ENCODE measurements at regions of chrX and their contacts with region 1.

Region 1: GRCh38 chrX:41653125-41653524 is 35.6 kb upstream of the GPR34 start:
- DNase-seq: no peak
- H3K4me3 ChIP-seq: no peak overlapping the region
- H3K27ac ChIP-seq: no peak overlapping the region
- H3K4me1 ChIP-seq: no peaks in the 10 kb centered on the region
- H3K27me3 ChIP-seq: peaks cover 0 to 18% of the 10 kb centered on the region in 2 donors
- CTCF ChIP-seq: no peak
- POLR2A ChIP-seq: no peak

Region 2: DNA sequence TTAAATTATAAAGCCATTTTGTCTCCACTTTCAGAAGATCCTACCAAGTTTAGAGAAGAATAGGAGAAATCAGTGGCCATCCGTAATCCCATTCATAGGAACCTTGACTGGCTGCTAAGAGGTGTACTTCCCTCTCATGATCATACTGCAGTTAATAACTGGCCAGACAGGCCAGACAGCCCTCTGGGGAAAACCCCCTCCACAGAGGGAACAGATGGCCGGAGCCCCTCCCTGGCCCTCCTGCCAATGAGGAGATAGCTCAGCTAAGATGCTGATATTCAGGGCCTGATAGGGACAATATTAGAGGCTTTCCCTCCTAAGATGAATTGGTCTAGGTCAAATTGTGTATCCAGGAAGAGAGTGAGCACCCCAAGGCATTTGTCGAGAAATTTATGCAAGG is 1802.9 kb after region 1 on chrX:
- intact Hi-C with region 1: loop called (anchors 10 kb)
- DNase-seq: no peak
- H3K4me3 ChIP-seq: no peak overlapping the region
- H3K27ac ChIP-seq: no peak overlapping the region
- H3K4me1 ChIP-seq: no peaks in the 10 kb centered on the region
- H3K27me3 ChIP-seq: peaks cover 0 to 44% of the 10 kb centered on the region in 2 donors
- CTCF ChIP-seq: no peak
- POLR2A ChIP-seq: no peak

Measured in breast epithelium (tissue), 4 donors.